ENCODE measurements at regions of chr12 and their contacts with region 1.

Region 1: DNA sequence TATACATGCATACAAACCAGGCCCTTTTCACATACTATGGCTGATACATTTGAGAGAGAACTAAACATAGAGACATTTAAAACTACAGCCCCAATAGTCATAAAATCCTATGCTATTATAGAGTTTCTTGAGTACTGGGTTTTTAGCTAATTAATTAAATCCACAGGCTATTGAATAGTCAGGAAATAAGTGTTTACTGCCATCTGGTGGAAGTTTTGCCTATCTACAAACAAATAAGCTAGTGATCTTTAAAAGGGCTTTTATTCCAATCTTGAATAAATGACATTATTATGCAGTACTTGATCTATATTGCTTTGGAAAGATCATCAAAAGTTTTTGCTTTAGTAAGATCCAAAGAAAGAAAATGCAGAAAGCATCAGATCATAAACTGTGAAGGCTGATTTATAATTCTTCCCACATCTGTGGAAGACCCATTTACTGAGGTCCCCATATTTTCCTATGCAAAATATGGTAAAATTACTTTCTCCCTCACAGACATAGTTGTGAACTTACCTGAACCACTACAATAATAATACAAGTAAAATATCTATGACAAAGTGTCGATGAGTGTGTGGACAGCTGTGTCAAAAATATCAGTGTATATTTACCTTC is 131.3 kb downstream of the ITPR2 start:
- DNase-seq: peak; percentile 65
- H3K4me3 ChIP-seq: no peak overlapping the region
- H3K27ac ChIP-seq: no peak overlapping the region
- H3K4me1 ChIP-seq: peaks cover 56% of the 10 kb centered on the region
- H3K27me3 ChIP-seq: no peaks in the 10 kb centered on the region
- CTCF ChIP-seq: peak; percentile 20 to 22
- POLR2A ChIP-seq: no peak

Region 2: DNA sequence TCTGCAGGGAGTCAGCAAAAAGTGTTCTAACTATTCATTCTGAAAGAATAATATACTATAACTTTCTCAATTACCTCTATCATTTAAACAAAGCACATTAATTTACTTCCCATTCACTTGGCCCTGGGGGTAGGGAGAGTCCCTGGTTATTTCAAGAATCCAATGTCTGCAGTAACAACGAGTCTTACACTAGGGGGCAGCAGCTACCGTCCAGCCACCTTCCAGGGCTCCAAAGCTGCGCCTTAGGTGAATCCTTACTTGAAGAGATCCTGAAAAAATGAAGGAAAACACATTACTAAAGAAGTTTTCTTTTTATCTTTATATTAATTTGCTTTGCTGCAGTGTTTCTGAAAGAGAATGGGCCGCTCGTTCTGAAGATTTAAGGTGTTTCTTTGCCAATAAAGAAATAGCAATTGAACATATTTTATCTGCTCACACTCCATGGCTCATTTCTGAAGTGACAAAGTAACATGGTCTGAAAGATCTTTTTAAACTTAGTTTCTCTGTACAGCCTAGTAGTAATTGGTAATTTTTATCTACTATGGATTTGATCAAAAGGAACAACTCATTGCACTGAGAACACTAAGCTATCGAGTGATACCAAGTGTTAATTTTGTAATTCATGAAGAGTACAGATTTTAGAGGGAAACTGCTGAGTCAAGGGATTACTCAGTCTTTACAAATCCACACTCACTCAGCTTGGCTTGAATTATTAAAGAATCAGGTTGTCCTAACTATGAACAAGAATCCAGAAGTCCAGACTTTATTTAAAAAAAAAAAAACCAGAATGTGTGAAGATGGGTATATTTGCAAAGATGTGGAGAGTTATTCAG is 604.4 kb before region 1 on chr12:
- CTCF ChIA-PET with region 1: interaction called, 25 read pairs
- POLR2A ChIA-PET with region 1: no interaction called
- dilution Hi-C with region 1: no loop called
- intact Hi-C with region 1: loop called (anchors 2 kb)
- DNase-seq: peak; percentile 76
- H3K4me3 ChIP-seq: no peak overlapping the region
- H3K27ac ChIP-seq: no peak overlapping the region
- H3K4me1 ChIP-seq: no peaks in the 10 kb centered on the region
- H3K27me3 ChIP-seq: no peaks in the 10 kb centered on the region
- CTCF ChIP-seq: peak; percentile 88 to 89
- POLR2A ChIP-seq: no peak

Region 3: DNA sequence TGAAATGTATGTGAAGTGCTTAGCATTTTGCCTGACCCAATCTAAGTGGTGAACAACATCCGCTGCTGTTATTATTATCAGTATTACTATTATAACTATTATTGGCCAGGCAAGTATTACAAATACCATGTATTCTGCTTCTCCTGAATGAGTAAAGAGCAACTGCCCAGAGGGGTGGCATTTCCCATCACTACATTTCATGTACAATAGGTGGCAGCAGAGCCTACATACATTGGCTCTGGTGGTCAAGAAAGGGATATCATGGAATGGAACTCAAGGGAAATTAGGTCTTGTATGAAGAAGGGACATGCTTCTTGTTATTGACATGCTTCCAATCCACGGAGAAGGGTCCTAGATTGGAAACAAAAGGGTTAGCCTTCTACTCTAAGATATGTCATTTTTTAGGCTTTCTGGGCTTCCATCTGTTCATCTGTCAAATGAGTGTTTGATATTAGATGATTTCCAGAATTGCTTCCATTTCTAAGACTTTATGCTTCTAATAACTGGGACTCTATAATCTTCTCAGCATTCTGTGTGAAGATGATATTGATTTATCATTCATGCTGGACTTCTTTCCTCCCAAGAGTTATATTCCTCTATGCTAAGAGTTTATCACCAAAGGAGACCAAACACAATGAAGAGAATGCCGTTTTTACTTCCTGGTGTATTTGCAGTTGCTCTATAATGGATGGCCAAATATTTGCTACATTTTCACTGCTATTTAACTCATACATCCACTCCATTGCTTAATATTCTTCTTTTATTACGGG is 267.2 kb before region 1 on chr12:
- CTCF ChIA-PET with region 1: interaction called, 9 read pairs
- POLR2A ChIA-PET with region 1: no interaction called
- dilution Hi-C with region 1: no loop called
- intact Hi-C with region 1: loop called (anchors 1 kb)
- DNase-seq: peak; percentile 69
- H3K4me3 ChIP-seq: no peak overlapping the region
- H3K27ac ChIP-seq: no peak overlapping the region
- H3K4me1 ChIP-seq: no peaks in the 10 kb centered on the region
- H3K27me3 ChIP-seq: no peaks in the 10 kb centered on the region
- CTCF ChIP-seq: peak; percentile 62 to 73
- POLR2A ChIP-seq: no peak

Region 4: DNA sequence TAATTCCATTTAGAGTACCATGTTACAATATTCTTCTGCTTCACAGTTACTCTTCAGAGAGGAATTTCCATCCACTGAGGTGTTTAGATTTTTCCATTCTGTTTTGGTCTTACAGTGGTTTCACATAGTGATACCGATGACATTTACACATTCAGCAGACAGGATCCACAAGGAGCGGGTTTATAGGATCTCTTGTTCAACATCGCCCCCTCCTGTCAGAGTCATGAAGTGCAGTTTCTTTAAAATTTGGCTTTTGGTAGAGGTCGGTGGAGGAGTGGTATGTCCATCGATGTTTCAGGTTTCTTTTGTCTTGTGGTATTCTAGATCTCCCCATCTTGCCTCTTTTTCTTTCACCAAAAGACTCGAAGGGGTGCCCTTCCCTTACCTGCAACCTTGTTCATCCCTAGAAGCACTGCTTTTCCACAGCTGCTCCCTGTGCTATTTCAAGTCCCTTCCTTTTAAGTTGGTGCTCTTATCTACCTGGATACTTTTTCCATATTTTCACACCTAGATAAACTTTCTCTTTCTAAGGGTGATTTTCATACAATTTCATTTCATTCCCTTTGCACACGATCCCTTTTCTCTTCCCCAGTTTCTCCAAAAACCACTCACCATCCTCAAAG is 50.0 kb before region 1 on chr12:
- CTCF ChIA-PET with region 1: interaction called, 82 read pairs
- POLR2A ChIA-PET with region 1: interaction called, 3 read pairs
- dilution Hi-C with region 1: no loop called
- intact Hi-C with region 1: loop called (anchors 1 kb)
- DNase-seq: peak; percentile 75
- H3K4me3 ChIP-seq: no peak overlapping the region
- H3K27ac ChIP-seq: no peak overlapping the region
- H3K4me1 ChIP-seq: peaks cover 23% of the 10 kb centered on the region
- H3K27me3 ChIP-seq: no peaks in the 10 kb centered on the region
- CTCF ChIP-seq: peak; percentile 63 to 70
- POLR2A ChIP-seq: no peak

Region 5: DNA sequence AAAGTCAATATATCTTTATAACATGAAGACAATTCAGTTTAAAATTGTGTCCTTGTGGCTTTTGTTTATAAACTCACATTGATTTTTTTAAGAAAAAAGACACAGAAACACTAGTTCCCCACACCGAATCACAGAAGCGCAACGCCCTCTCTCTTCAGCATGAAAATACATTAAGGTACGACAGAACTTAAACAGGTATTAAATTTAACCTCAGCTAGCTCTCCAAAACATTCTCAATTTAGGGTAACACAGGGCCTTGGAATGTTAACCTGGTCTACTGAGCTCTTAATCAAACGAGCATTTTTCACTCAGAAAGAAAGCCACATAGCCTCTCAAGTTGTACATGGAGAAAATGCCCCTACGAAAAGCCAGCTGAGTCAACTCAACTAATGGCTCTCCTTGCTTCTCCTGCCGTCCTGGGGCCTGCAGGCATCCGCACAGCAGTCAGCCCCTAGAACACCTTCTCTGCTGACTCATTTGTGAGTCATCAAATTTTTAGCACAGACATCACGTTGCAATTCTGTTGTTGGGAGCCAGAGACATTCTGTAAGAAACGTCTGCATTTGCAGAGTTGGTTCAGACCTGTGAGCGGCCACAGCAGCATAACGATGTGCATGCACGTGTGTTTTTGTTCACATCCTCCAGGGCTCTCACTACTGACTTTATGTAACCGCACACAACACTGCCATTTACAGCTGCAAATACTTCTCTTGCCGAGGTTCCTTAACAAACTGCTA is 10.3 kb before region 1 on chr12:
- CTCF ChIA-PET with region 1: interaction called, 37 read pairs
- POLR2A ChIA-PET with region 1: interaction called, 3 read pairs
- dilution Hi-C with region 1: no loop called
- intact Hi-C with region 1: no loop called
- DNase-seq: peak; percentile 96
- H3K4me3 ChIP-seq: no peak overlapping the region
- H3K27ac ChIP-seq: peak overlapping the region; percentile 85
- H3K4me1 ChIP-seq: peaks cover 50% of the 10 kb centered on the region
- H3K27me3 ChIP-seq: no peaks in the 10 kb centered on the region
- CTCF ChIP-seq: no peak
- POLR2A ChIP-seq: peak; percentile 79

Region 6: GRCh38 chr12:26845057-26845666 is 143.5 kb after region 1 on chr12:
- CTCF ChIA-PET with region 1: interaction called, 14 read pairs
- POLR2A ChIA-PET with region 1: no interaction called
- dilution Hi-C with region 1: no loop called
- intact Hi-C with region 1: no loop called
- DNase-seq: peak; percentile 65
- H3K4me3 ChIP-seq: no peak overlapping the region
- H3K27ac ChIP-seq: no peak overlapping the region
- H3K4me1 ChIP-seq: peaks cover 15% of the 10 kb centered on the region
- H3K27me3 ChIP-seq: no peaks in the 10 kb centered on the region
- CTCF ChIP-seq: peak; percentile 65 to 66
- POLR2A ChIP-seq: no peak

Region 7: GRCh38 chr12:27014085-27014858 is 312.6 kb after region 1 on chr12 and contains the start of gene TM7SF3:
- CTCF ChIA-PET with region 1: interaction called, 7 read pairs
- POLR2A ChIA-PET with region 1: no interaction called
- dilution Hi-C with region 1: no loop called
- intact Hi-C with region 1: loop called (anchors 10 kb)
- DNase-seq: peak; percentile 83
- H3K4me3 ChIP-seq: peak within 1 kb of the TSS; percentile 48 to 89 (median 65)
- H3K27ac ChIP-seq: peak within 1 kb of the TSS; percentile 81
- H3K4me1 ChIP-seq: peaks cover 11% of the 10 kb centered on the region
- H3K27me3 ChIP-seq: no peaks in the 10 kb centered on the region
- CTCF ChIP-seq: peak; percentile 87 to 99
- POLR2A ChIP-seq: peak; percentile 55
- total RNA-seq, gene TM7SF3: 51.0 and 54.8 TPM in 2 replicates

Measured in endothelial cell of umbilical vein (primary cell).